Dorsolateral prefrontal cortex (tissue), 120 donors: ENCODE measurements at regions of chr9 and their contacts with region 1.

Region 1: DNA sequence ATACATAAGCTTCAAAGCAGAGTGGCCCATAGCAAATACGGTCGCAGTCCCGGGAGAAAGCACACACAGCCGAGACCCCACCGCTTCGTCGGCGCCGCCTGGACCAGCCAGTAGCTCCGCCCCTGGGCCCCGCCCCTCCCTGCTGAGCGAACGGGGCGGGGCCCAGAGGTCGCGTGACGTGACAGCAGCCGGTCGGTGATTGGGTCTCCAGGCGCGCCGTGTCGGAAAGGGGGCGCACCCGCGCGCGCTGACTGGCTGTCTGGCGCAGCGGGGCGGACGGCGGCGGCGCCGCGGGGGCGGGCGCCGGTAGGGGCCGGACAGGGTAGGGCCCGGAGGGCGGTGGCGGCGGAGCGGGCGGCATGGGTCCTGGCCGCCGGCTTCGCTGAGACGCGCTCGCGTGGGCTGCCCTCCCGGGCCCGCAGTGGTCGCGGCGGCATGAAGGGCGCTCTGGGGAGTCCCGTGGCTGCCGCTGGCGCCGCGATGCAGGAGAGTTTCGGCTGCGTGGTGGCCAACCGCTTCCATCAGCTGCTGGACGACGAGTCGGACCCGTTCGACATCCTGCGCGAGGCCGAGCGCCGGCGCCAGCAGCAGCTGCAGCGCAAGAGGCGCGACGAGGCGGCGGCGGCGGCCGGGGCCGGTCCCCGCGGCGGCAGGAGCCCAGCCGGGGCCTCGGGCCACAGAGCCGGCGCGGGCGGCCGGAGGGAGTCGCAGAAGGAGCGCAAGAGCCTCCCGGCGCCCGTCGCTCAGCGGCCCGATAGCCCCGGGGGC is at the start of gene HABP4:
- DNase-seq: peak; percentile 92 to 99 (median 96)
- H3K4me3 ChIP-seq: peak within 1 kb of the TSS; percentile 52 to 94 (median 84)
- H3K27ac ChIP-seq: peak within 1 kb of the TSS in 58 of 59 donors; percentile 40 to 95 (median 86)
- H3K27me3 ChIP-seq: no peaks in the 10 kb centered on the region
- CTCF ChIP-seq: peak in 39 of 56 donors; percentile 6 to 77 (median 34)
- total RNA-seq, gene HABP4: 55.7 to 140 (median 94.3) TPM

Region 2: DNA sequence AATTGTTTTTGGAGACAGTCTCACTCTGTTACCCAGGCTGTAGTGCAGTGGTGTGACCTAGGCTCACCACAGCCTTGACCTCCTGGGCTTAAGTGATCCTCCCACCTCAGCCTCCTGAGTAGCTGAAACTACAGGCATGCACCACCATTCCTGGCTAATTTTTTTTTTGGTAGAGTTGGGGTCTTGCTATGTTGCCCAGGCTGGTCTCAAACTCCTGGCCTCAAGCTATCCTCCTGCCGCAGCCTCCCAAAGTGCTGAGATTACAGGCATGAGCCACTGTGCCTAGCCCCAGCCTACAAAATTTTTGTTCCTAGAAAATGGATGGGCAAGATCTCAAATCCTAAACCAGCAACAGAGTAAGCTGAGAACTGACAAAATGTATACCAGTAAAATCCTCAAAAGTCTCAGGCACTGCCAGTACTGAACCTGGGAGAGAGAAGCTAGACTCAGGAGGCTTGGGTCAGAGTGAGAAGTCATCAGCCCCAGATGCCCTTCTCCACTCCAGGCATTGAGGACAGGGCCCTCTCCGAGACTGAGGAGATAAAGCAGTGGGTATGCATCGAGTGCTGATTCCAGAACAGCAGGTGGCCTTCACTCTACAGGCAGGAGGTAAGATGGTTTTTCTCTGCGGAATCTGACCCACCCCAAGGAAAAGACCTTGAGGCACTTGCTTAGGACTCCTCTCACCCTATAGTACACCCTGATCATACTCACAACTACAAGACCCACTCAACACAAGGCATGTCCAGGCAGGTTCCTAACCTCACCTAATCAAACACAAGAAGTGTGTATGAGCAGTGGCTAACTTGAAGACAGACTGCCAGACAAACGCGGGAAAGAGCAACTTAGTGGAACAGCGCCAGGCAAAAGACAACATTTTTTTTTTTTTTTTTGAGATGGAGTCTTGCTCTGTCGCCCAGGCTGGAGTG is 183.5 kb before region 1 on chr9:
- intact Hi-C with region 1: no loop called
- DNase-seq: no peak
- H3K4me3 ChIP-seq: no peak overlapping the region
- H3K27ac ChIP-seq: no peak overlapping the region
- H3K27me3 ChIP-seq: no peaks in the 10 kb centered on the region
- CTCF ChIP-seq: no peak

Region 3: GRCh38 chr9:96400132-96400910 is 49.7 kb before region 1 on chr9:
- intact Hi-C with region 1: no loop called
- DNase-seq: no peak
- H3K4me3 ChIP-seq: no peak overlapping the region
- H3K27ac ChIP-seq: no peak overlapping the region
- H3K27me3 ChIP-seq: no peaks in the 10 kb centered on the region
- CTCF ChIP-seq: no peak

Region 4: GRCh38 chr9:96418074-96418809 is 31.8 kb before region 1 on chr9 and contains the start of gene ZNF367:
- intact Hi-C with region 1: loop called (anchors 2 to 5 kb)
- DNase-seq: peak; percentile 93 to 98 (median 96)
- H3K4me3 ChIP-seq: peak within 1 kb of the TSS; percentile 66 to 100 (median 89)
- H3K27ac ChIP-seq: peak within 1 kb of the TSS; percentile 94 to 100 (median 99)
- H3K27me3 ChIP-seq: no peaks in the 10 kb centered on the region
- CTCF ChIP-seq: peak in 10 of 56 donors; percentile 5 to 36 (median 16)
- total RNA-seq, gene ZNF367: 0.69 to 9.8 (median 1.8) TPM

Region 5: DNA sequence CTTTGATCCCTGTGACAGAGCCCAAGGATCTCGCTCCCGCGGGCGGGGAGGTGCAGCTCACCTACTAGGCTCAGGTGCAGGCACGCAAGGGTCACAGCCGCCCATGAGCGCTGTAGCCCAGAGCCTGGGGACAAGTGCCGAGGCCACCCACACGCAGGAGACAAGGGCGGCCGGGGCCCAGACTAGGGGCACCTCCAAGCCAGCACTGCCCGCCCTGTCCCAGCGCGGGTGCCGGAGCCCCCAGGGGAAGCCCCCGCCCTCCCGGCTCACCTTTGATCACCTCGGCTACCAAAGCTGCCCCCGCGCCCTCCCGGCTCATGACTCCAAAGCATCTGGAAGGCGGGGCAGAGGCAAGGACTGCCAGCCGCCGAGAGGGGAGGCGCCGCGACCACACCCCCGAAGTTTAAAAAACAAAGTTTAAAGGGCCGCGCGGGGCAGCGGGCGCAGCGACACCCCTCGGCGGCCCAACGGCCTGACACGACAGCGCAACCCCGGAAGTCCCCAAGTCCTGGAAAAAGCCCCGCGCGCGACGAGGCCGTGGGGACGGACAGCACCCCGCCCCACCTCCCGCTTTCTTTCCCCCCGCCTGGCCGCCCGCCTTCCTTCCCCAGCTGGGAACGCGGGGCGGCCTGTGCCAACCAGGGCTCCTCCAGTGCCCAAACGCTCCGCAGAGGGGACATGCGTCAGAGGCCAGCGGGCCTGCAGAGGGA is 116.6 kb after region 1 on chr9:
- intact Hi-C with region 1: loop called (anchors 2 to 5 kb)
- DNase-seq: peak; percentile 38 to 86 (median 76)
- H3K4me3 ChIP-seq: peak overlapping the region; percentile 53 to 92 (median 78)
- H3K27ac ChIP-seq: peak overlapping the region; percentile 73 to 99 (median 97)
- H3K27me3 ChIP-seq: no peaks in the 10 kb centered on the region
- CTCF ChIP-seq: peak; percentile 40 to 87 (median 72)

Region 6: GRCh38 chr9:96619491-96620154 is 169.6 kb after region 1 on chr9 and contains the start of gene CDC14B:
- intact Hi-C with region 1: loop called (anchors 2 kb)
- DNase-seq: peak; percentile 56 to 96 (median 93)
- H3K4me3 ChIP-seq: peak within 1 kb of the TSS; percentile 56 to 93 (median 84)
- H3K27ac ChIP-seq: peak within 1 kb of the TSS; percentile 77 to 99 (median 95)
- H3K27me3 ChIP-seq: no peaks in the 10 kb centered on the region
- CTCF ChIP-seq: peak in 18 of 56 donors; percentile 0 to 47 (median 16)
- total RNA-seq, gene CDC14B: 28.9 to 134 (median 53.2) TPM

Region 7: DNA sequence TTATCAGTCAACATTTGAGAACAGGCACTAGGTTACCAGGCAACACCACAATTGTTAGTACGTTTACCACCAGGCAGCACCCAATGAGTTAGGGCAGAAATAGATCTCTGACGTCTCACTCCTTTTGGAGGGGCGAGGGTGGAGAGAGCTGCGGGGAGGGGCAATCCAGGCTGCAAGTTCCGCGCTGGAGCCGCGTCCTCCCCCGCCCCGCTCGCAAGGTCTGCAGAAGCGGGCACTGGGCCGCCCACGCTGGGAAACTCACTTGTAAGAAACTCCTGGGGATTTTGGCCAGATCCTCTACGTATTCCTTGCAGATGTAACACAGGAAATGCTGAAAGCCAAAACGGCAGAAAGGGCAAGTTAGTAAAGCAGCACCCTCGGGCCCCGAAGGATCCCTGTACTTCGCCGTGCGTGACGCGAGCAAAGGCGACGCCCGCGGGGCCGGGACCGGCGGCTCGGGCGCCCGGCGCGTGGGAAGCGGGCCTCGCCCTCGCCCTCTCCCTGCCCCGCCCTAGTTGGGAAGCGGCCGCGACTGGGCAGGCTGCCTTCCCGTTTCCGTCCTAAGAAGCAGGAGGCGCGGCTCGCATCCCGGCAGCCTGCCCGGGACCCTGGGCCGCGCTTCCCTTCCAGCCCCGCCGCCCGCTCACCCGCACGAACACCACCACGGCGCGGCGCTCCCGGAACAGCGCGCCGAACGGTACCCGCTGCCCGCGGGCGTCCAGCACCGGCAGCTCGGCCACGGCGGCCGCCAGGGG is 204.6 kb after region 1 on chr9:
- intact Hi-C with region 1: loop called (anchors 5 kb)
- DNase-seq: peak; percentile 46 to 85 (median 73)
- H3K4me3 ChIP-seq: peak overlapping the region; percentile 45 to 81 (median 70)
- H3K27ac ChIP-seq: peak overlapping the region; percentile 71 to 98 (median 93)
- H3K27me3 ChIP-seq: no peaks in the 10 kb centered on the region
- CTCF ChIP-seq: peak in 24 of 56 donors; percentile 8 to 52 (median 22)